Panc1 (cell line): ENCODE measurements at regions of chr17 and their contacts with region 1.

Region 1: DNA sequence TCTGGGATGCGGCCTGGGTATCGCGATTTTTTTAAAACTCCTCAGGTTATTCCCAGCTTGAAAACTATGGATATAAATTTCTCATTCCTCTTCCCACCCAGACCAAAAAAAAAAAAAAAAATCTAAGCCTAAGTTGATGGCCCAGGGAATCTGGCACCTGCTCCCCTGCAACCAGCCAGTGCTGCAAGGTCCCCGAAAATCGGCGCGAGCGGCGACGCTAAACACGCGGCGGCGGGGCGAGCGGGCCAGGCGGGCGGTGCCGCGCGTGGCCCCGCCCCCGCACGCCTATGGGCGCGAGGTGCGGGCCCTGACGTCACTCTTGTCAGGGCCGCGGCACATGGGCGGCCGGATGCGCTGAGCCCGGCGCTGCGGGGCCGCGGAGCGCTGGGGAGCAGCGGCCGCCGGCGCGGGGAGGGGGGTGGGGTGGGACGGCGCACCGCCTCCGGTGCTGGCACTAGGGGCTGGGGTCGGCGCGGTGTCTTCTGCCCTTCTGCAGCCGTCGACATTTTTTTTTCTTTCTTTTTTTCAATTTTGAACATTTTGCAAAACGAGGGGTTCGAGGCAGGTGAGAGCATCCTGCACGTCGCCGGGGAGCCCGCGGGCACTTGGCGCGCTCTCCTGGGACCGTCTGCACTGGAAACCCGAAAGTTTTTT is at the start of gene HLF:
- DNase-seq: no peak
- ATAC-seq: peak; percentile 97
- H3K4me3 ChIP-seq: peak within 1 kb of the TSS; percentile 32 to 47
- H3K27ac ChIP-seq: no peak within 1 kb of the TSS
- H3K4me1 ChIP-seq: peaks cover 11% of the 10 kb centered on the region
- H3K27me3 ChIP-seq: peaks cover 59% of the 10 kb centered on the region
- CTCF ChIP-seq: no peak
- total RNA-seq, gene HLF: 0.13 TPM

Region 2: GRCh38 chr17:54944796-54945195 is 320.0 kb before region 1 on chr17:
- CTCF ChIA-PET with region 1: no interaction called
- POLR2A ChIA-PET with region 1: no interaction called
- in situ Hi-C with region 1: no loop called
- intact Hi-C with region 1: no loop called
- DNase-seq: no peak
- ATAC-seq: no peak
- H3K4me3 ChIP-seq: no peak overlapping the region
- H3K27ac ChIP-seq: no peak overlapping the region
- H3K4me1 ChIP-seq: 0 out of 2 replicates have a peak, but pooled peaks cover 4% of the 10 kb centered on the region
- H3K27me3 ChIP-seq: no peaks in the 10 kb centered on the region
- CTCF ChIP-seq: no peak

Region 3: GRCh38 chr17:55238179-55238930 is 26.4 kb before region 1 on chr17:
- CTCF ChIA-PET with region 1: no interaction called
- POLR2A ChIA-PET with region 1: no interaction called
- in situ Hi-C with region 1: no loop called
- intact Hi-C with region 1: loop called (anchors 1 kb)
- DNase-seq: peak; percentile 47
- ATAC-seq: peak; percentile 98
- H3K4me3 ChIP-seq: peak overlapping the region; percentile 59 to 77
- H3K27ac ChIP-seq: peak overlapping the region; percentile 52; the same call in 1 of the 2 replicates
- H3K4me1 ChIP-seq: 0 out of 2 replicates have a peak, but pooled peaks cover 5% of the 10 kb centered on the region
- H3K27me3 ChIP-seq: peaks cover 15% of the 10 kb centered on the region
- CTCF ChIP-seq: no peak

Region 4: DNA sequence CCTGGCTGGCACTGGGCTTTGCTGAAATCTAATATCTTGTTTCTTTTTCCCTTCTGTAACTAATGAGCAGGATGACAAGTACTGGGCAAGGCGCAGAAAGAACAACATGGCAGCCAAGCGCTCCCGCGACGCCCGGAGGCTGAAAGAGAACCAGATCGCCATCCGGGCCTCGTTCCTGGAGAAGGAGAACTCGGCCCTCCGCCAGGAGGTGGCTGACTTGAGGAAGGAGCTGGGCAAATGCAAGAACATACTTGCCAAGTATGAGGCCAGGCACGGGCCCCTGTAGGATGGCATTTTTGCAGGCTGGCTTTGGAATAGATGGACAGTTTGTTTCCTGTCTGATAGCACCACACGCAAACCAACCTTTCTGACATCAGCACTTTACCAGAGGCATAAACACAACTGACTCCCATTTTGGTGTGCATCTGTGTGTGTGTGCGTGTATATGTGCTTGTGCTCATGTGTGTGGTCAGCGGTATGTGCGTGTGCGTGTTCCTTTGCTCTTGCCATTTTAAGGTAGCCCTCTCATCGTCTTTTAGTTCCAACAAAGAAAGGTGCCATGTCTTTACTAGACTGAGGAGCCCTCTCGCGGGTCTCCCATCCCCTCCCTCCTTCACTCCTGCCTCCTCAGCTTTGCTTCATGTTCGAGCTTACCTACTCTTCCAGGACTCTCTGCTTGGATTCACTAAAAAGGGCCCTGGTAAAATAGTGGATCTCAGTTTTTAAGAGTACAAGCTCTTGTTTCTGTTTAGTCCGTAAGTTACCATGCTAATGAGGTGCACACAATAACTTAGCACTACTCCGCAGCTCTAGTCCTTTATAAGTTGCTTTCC is 56.0 kb after region 1 on chr17:
- CTCF ChIA-PET with region 1: no interaction called
- POLR2A ChIA-PET with region 1: no interaction called
- in situ Hi-C with region 1: no loop called
- intact Hi-C with region 1: no loop called
- DNase-seq: no peak
- ATAC-seq: peak; percentile 70
- H3K4me3 ChIP-seq: peak overlapping the region; percentile 22 to 53
- H3K27ac ChIP-seq: no peak overlapping the region
- H3K4me1 ChIP-seq: peaks cover 3% of the 10 kb centered on the region; the same call in 1 of the 2 replicates
- H3K27me3 ChIP-seq: no peaks in the 10 kb centered on the region
- CTCF ChIP-seq: no peak